ENCODE measurements at regions of chr10 and their contacts with region 1.

Region 1: DNA sequence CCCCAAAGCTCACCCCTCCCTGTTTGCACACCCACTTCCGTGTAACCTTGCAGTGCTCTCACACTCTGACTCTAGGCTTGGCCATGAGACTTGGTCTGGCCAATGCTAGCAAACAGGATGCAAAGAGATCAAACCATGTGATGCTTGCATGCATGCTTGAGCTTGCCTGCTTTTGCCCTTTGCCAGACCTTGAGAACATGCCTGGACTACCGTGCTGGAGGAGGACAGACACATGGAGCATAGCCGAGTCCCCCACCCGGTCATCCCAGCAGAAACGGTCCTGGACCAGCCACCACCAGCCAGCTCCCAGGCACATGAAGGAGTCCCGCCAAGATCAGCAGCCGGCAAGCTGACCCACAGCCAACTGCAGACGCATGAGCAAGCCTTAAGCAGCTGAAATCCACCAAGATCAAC is 23.4 kb downstream of the PYROXD2 start:
- DNase-seq: no peak
- H3K4me3 ChIP-seq: no peak overlapping the region
- CTCF ChIP-seq: no peak

Region 2: GRCh38 chr10:98242823-98243222 is 148.8 kb before region 1 on chr10:
- CTCF ChIA-PET with region 1: interaction called, 81 read pairs
- POLR2A ChIA-PET with region 1: interaction called, 8 read pairs
- DNase-seq: no peak
- H3K4me3 ChIP-seq: no peak overlapping the region
- CTCF ChIP-seq: peak; percentile 50

Region 3: GRCh38 chr10:98262571-98262970 is 129.0 kb before region 1 on chr10:
- CTCF ChIA-PET with region 1: interaction called, 34 read pairs
- POLR2A ChIA-PET with region 1: interaction called, 5 read pairs
- DNase-seq: no peak
- H3K4me3 ChIP-seq: no peak overlapping the region
- CTCF ChIP-seq: peak; percentile 49

Region 4: DNA sequence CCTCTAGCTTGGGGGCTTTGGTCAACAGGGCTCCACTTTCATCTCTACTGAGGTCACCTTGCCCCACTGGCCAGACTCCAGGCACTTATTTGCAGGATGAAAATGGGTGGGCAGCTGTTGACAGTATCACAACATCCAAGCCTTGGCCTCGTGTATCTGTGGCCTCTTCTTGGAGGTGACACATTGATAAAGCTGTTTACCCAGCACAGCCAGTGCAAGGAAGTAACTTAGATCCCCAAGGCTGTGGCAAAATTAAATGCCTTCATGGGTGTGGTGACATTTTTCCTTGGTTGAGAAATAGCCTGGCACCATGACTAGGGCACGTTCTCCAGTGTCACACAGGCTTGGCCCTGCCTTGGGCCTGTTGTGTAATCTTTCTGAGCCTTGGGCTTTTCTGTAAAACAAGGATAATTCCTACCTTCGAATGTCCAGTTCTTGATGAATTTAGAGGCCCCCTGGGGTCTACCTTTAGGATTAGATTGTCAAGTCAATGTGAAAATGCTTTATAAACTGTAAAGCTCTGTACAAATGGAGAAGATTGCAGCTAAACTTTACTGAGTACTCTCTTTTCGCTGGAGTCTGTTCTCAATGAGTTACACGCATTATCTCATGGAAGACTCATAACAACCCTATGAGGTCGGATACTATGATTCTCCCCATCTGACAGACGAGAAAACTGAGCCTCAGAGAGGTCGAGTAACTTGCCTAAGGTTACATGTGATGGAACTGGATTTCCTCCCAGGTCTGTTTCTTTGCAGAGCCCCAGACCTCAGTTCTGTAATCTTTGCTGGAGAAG is 76.9 kb before region 1 on chr10:
- CTCF ChIA-PET with region 1: interaction called, 77 read pairs
- POLR2A ChIA-PET with region 1: interaction called, 4 read pairs
- DNase-seq: no peak
- H3K4me3 ChIP-seq: no peak overlapping the region
- CTCF ChIP-seq: no peak

Region 5: GRCh38 chr10:98404571-98405359 is 13.2 kb after region 1 on chr10:
- CTCF ChIA-PET with region 1: interaction called, 13 read pairs
- POLR2A ChIA-PET with region 1: no interaction called
- DNase-seq: peak; percentile 24
- H3K4me3 ChIP-seq: no peak overlapping the region
- CTCF ChIP-seq: no peak